ENCODE measurements at regions of chr11 and their contacts with region 1.

Region 1: GRCh38 chr11:8006349-8006977 is 19.3 kb downstream of the EIF3F start:
- DNase-seq: peak; percentile 60
- H3K4me3 ChIP-seq: no peak overlapping the region
- CTCF ChIP-seq: peak; percentile 94

Region 2: DNA sequence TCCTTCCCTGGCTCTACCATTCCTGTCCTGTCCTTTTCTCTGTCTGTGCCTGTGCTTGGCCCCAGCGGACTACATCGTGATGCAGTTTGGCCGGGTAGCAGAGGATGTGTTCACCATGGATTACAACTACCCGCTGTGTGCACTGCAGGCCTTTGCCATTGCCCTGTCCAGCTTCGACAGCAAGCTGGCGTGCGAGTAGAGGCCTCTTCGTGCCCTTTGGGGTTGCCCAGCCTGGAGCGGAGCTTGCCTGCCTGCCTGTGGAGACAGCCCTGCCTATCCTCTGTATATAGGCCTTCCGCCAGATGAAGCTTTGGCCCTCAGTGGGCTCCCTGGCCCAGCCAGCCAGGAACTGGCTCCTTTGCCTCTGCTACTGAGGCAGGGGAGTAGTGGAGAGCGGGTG is 95.0 kb after region 1 on chr11:
- in situ Hi-C with region 1: loop called (anchors 10 kb)
- DNase-seq: no peak
- H3K4me3 ChIP-seq: no peak overlapping the region
- CTCF ChIP-seq: no peak